ENCODE measurements at regions of chr10 and their contacts with region 1.

Region 1: DNA sequence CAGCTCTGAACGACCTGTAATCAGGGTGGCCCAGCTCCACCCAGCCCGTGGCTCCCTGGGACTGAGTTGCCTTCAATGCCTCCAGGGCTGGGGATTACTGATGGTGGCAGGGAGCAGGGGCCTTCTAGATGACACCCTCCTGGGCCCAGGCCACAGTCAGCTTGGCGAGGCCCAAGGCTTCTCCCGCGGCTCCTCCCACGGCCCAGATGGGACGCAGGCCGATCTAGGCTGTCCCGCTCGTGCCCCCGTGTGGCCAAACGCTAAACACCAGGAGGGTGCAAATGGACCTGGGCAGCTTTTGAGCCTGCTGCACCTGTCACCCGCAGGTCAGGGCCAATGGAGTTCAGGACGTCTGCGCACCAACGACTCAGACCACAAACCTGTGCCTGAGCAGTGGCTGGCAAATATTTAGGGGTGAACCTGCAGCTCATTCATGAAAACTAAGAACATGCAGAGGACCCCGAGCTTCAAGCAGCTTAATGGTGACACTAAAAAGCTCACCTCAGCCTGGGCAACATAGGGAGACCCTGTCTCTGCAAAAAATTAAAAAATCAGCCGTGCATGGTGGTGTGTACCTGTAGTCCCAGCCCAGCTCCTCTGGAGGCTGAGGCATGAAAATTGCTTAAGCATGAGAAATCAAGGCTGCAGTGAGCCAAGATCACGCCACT is 43.2 kb downstream of the ASB13 start:
- DNase-seq: peak; percentile 75 to 88
- ATAC-seq: peak; percentile 93 to 98
- H3K4me3 ChIP-seq: no peak overlapping the region
- H3K27ac ChIP-seq: peak overlapping the region; percentile 78 to 91
- H3K4me1 ChIP-seq: peaks cover 14% of the 10 kb centered on the region
- CTCF ChIP-seq: peak; percentile 86
- EP300 ChIP-seq: no peak
- POLR2A ChIP-seq: no peak
- RAD21 ChIP-seq: peak; percentile 99

Region 2: GRCh38 chr10:5434017-5434753 is 189.0 kb before region 1 on chr10:
- CTCF ChIA-PET with region 1: interaction called, 432 read pairs
- POLR2A ChIA-PET with region 1: no interaction called
- DNase-seq: peak; percentile 40 to 73
- ATAC-seq: peak; percentile 94
- H3K4me3 ChIP-seq: no peak overlapping the region
- H3K27ac ChIP-seq: peak overlapping the region; percentile 75 to 78
- H3K4me1 ChIP-seq: peaks cover 26% of the 10 kb centered on the region
- CTCF ChIP-seq: peak; percentile 96
- EP300 ChIP-seq: no peak
- POLR2A ChIP-seq: no peak
- RAD21 ChIP-seq: peak; percentile 88 to 93

Region 3: DNA sequence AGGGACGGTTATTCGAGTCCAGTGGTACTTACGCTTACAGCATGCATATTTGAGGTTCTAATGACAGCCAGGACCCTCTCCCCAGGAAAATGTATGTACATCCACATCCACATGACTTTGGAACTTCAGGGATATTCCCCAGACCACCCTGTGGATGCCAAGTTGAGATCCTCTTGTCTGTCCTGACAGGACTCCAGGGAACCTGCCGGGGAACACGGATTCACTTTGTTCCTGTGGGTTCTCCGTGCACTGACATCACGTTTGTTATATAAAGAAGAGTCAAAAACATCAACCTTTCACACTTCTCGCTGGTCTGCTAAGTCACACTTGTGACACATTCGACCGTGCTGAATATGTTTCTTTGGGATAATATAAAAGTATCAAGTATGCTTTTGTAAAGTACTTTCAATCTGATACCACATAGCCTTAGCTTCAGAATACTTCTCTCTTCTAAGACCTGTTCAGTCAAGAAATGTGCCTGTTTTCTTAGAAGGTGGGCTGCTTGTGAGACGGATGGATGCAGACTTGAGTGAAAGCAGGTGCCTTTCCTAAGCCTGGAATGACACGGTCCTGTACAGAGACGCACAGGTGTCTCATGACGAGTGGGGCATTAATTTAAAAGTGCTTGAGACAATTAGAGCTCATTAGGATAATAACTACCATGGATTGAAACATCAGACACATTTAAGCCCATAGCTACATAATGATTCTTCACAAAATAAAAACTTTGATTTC is 162.6 kb before region 1 on chr10:
- CTCF ChIA-PET with region 1: interaction called, 33 read pairs
- POLR2A ChIA-PET with region 1: no interaction called
- DNase-seq: no peak
- ATAC-seq: no peak
- H3K4me3 ChIP-seq: no peak overlapping the region
- H3K27ac ChIP-seq: no peak overlapping the region
- H3K4me1 ChIP-seq: no peaks in the 10 kb centered on the region
- CTCF ChIP-seq: no peak
- EP300 ChIP-seq: no peak
- POLR2A ChIP-seq: no peak
- RAD21 ChIP-seq: no peak

Region 4: DNA sequence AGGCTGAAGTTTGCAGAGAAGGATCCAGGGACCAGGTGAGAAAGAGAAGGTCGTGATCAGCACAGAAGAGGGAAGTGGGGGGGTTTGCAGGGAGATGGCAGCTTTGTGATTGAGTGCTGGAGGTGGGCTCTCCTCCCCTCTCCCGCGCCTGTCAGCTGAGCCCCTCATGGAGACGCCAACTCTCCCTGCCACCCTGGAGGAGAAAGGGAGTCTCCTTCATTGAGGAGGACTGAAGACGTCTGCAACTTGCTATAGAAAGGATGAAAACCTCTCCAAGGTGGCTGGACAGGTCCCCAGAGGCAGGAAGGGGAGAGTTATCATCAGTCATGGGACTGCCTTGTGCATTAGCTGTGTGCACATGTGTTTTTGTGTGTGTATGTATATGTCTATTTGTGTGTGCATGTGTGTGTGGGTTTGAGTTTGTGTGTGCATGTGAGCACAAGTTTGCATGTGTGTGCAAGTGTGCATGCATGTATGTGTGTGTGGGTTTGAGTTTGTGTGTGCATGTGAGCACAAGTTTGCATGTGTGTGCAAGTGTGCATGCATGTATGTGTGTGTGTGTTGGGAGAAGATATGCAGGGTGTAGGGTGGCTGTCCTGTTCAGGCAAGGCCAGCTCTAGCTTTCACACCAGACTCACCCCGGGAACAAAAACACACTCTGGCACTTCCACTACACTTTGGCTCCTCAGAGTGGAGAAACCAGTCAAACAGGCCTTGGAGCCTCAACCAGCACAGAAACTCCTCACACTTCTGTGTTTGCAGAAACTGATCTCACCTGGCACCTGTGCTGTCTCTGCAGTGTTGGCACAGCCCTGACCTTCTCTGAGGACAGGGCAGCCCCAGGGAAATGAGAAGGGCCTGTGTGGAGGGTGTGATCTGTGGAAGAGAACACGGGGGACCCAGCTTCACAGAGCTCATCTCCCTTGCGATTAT is 120.0 kb before region 1 on chr10:
- CTCF ChIA-PET with region 1: interaction called, 23 read pairs
- POLR2A ChIA-PET with region 1: no interaction called
- DNase-seq: no peak
- ATAC-seq: no peak
- H3K4me3 ChIP-seq: no peak overlapping the region
- H3K27ac ChIP-seq: no peak overlapping the region
- H3K4me1 ChIP-seq: no peaks in the 10 kb centered on the region
- CTCF ChIP-seq: no peak
- EP300 ChIP-seq: no peak
- POLR2A ChIP-seq: no peak
- RAD21 ChIP-seq: no peak

Region 5: DNA sequence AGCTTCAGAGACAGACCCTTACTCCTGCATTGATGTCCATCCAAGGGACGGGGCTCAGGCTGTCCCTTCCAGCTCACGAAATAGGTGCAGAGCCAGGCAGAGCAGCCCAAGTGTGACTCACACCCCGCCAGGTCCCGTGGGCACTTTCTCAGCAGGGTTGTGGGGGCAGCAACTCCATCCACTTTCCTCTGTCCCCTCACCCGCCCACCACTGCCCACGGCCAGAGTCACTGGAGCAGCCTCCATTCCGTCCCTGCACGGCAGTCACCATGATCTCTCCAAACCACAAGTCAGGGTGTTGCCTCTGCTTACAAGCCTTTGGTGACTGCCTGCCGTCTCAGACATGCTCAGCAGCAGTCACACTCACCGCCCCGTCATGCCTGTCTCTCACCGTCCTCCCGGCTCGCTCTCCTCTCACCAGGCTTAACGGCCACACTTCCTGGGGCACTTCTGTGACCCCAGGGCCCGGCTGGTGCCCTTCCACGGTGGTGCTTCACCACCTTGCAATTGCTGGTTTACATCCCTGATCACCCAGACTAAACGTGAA is 59.2 kb before region 1 on chr10:
- CTCF ChIA-PET with region 1: interaction called, 37 read pairs
- POLR2A ChIA-PET with region 1: no interaction called
- DNase-seq: no peak
- ATAC-seq: no peak
- H3K4me3 ChIP-seq: no peak overlapping the region
- H3K27ac ChIP-seq: peak overlapping the region in 1 of 2 experiments; percentile 43; a peak in 2 of 6 replicates
- H3K4me1 ChIP-seq: peaks cover 15% of the 10 kb centered on the region
- CTCF ChIP-seq: no peak
- EP300 ChIP-seq: no peak
- POLR2A ChIP-seq: no peak
- RAD21 ChIP-seq: no peak

Region 6: DNA sequence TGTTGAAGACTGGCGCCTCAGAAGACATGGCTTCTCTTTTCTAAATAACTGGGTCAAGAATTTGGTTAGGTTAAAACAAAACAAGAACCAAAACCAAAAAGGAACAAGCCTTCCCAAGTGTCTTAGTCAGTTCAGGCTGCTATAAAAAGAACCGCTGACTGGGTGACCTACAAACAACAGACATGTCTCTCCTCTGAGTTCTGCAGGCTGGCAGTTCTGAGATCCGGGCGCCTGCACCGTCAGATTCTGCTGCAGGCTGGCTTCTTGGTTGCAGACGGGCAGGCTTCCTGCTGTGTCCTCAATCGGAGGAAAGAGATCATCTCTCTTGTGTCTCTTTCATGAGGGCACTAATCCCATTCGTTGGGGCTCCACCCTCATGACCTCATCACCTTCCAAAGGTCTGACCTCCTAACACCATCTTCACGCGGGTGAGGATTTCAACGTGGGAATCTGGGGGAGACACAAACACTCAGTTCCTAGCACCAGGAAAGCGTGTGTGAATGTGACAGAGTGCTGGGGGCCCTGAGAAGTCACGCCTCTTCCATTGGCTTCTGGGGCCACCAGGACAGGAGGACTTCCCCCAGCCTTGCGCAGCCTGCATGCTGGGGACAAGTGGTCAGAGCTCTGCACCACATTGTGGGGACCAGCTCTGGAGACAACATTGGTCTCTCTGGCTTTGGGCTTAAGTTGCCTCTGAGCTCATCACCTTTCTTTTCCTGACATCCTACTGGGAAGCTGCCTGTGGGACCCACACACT is 19.9 kb before region 1 on chr10:
- CTCF ChIA-PET with region 1: interaction called, 108 read pairs
- POLR2A ChIA-PET with region 1: no interaction called
- DNase-seq: no peak
- ATAC-seq: no peak
- H3K4me3 ChIP-seq: no peak overlapping the region
- H3K27ac ChIP-seq: no peak overlapping the region; a peak in 1 of 6 replicates
- H3K4me1 ChIP-seq: no peaks in the 10 kb centered on the region
- CTCF ChIP-seq: no peak
- EP300 ChIP-seq: no peak
- POLR2A ChIP-seq: no peak
- RAD21 ChIP-seq: no peak

Region 7: DNA sequence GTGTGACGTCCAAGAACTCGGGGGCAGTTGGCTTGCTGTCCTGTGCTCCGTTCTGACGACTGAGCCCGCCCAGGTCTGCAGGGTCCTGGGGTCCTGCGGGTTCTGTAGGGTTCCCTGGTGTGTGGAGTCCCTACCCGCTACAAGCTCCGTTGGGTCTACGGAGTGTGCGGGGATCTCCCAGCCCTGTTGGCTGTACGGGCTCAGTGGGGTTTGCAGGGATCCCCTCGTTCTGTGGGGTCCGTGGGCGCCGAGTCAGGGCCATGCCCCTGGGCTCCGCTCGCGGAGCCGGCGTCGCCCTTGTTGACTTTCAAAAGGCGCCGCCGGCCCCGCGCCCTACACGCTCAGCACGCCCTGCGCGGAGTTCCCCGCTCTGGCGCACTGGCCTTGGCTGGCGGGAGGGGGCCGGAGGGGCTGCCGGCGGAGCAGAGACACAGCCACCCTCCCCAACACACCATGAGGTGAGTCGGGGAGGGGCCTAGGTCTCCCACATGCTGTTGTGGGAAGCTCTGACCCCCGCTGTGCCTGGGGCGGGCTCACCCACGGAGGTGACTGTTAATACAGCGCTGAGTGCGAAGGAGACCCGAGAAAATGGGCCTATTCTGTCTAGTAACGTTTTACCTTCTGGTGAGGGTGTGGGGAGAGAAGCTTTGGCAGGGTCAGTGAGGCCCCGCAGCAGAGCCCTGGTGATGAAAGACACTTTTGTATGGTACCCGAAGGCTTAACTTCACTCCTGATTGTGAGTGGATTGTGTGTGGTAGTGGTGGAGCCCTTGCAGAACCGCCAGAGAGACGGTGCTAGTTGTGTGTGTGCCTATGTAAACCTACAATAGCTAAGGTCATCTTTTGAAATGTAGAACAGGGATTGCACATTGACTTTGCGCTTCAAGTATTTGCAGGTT is 69.5 kb after region 1 on chr10:
- CTCF ChIA-PET with region 1: interaction called, 10 read pairs
- POLR2A ChIA-PET with region 1: no interaction called
- DNase-seq: peak; percentile 18 to 55
- ATAC-seq: peak; percentile 91 to 92
- H3K4me3 ChIP-seq: peak overlapping the region; percentile 51
- H3K27ac ChIP-seq: peak overlapping the region; percentile 67 to 91
- H3K4me1 ChIP-seq: peaks cover 24% of the 10 kb centered on the region; the same call in 2 of the 3 replicates
- CTCF ChIP-seq: no peak
- EP300 ChIP-seq: no peak
- POLR2A ChIP-seq: no peak
- RAD21 ChIP-seq: no peak

Measured in A549 (cell line).